CD4-positive, alpha-beta memory T cell (primary cell): ENCODE measurements at regions of chr2 and their contacts with region 1.

Region 1: GRCh38 chr2:218301176-218301819 is 9.0 kb upstream of the TMBIM1 start:
- DNase-seq: peak; percentile 83 to 87 (median 84)
- H3K4me3 ChIP-seq: no peak overlapping the region
- H3K4me3 Mint-ChIP-seq: no peak overlapping the region
- H3K27ac ChIP-seq: no peak overlapping the region
- H3K27ac Mint-ChIP-seq: peak overlapping the region; percentile 7 to 91 (median 39)
- H3K4me1 ChIP-seq: peaks cover 8% of the 10 kb centered on the region
- H3K4me1 Mint-ChIP-seq: peaks cover 3 to 8% (median 5%) of the 10 kb centered on the region in 4 donors
- H3K27me3 ChIP-seq: no peaks in the 10 kb centered on the region
- H3K27me3 Mint-ChIP-seq: no peaks in the 10 kb centered on the region

Region 2: DNA sequence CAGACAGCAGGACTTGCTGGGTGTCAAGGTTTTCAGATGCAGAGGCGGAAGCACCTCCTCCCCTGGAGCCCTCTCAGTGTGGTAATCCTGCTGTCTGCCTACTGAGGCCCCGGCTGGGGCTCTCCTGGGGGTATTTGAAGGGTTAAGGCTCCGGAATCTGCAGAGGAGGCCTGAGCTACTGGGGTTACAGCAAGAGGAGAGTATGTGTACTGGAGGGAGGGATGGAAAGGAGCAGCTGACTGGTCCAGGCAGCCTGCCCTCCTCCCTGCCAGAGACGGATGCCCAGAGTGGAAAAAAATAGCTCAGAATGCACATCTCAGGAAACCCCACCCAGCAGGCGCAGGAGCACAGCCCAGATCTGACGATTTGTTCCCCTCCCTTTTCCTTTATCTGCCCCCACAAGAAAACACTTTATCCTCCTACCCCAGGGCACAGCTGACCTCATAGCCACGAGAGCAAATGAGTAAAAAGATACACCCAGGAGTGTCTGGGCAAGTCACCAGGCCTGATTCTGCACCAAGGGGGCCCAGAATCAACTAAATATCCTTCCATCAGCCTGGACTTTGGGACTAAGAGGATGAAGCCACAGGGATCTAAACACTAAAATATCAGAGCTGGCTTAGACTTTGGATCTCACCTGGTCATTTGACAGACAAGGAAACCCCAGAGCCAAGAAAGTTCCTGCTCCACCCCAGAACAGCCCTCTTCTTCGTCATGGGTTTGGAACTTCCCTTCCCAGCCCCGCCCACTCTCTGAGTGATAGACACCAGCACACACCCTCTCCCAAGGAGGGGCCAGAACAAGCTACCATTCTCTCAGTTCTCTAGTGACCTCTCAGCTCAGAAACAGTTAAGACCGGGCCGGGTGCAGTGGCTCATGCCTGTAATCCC is 14.5 kb before region 1 on chr2:
- CTCF ChIA-PET with region 1: interaction called, 22 read pairs
- POLR2A ChIA-PET with region 1: interaction called, 18 read pairs
- intact Hi-C with region 1: no loop called
- DNase-seq: peak; percentile 84 to 97 (median 87)
- H3K4me3 ChIP-seq: peak overlapping the region; percentile 53 to 86
- H3K4me3 Mint-ChIP-seq: peak overlapping the region; percentile 90 to 97 (median 91)
- H3K27ac ChIP-seq: peak overlapping the region; percentile 94
- H3K27ac Mint-ChIP-seq: peak overlapping the region; percentile 98 to 100 (median 99)
- H3K4me1 ChIP-seq: peaks cover 92% of the 10 kb centered on the region
- H3K4me1 Mint-ChIP-seq: peaks cover 55 to 95% (median 73%) of the 10 kb centered on the region in 4 donors
- H3K27me3 ChIP-seq: no peaks in the 10 kb centered on the region
- H3K27me3 Mint-ChIP-seq: no peaks in the 10 kb centered on the region

Region 3: DNA sequence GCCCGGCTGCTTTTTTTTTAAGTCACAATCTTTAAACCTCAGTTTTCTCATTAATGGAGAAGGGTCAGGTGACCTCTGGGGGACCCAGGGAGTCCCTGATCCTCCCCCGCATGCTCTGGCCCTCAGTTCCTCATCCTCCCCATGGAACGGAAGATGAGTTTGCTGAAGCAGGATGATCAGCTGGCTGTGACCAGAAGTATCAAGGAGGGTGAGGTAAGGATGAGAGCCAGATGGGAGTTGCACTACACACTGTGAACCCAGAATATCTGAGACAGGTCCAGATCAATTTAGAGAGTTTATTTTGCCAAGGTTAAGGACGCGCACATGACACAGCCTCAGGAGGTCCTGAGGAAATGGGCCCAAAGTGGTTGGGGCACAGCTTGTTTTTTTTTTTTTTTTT is 59.1 kb after region 1 on chr2:
- CTCF ChIA-PET with region 1: interaction called, 151 read pairs
- POLR2A ChIA-PET with region 1: interaction called, 12 read pairs
- intact Hi-C with region 1: loop called (anchors 1 kb)
- DNase-seq: no peak
- H3K4me3 ChIP-seq: no peak overlapping the region
- H3K4me3 Mint-ChIP-seq: no peak overlapping the region
- H3K27ac ChIP-seq: no peak overlapping the region
- H3K27ac Mint-ChIP-seq: no peak overlapping the region
- H3K4me1 ChIP-seq: peaks cover 6% of the 10 kb centered on the region
- H3K4me1 Mint-ChIP-seq: peaks cover 0 to 4% (median 2%) of the 10 kb centered on the region in 4 donors
- H3K27me3 ChIP-seq: no peaks in the 10 kb centered on the region
- H3K27me3 Mint-ChIP-seq: no peaks in the 10 kb centered on the region

Region 4: DNA sequence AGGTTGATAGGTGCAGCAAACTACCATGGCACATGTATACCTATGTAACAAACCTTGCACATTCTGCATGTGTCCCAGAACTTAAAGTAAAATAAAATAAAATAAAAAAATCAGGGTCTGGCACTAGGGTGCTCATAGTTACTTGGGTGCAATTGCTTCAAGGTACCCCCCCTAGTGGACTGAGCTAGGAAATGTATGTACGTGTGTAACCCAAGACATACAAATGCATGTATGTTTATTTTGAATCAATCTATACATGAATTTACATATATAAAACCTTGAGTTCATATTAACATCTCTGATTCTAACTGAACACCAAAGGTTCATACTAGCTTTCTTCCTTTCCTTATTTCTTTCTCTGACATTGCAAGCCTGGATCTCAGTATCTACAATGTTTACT is 215.3 kb after region 1 on chr2:
- CTCF ChIA-PET with region 1: interaction called, 3 read pairs
- POLR2A ChIA-PET with region 1: no interaction called
- intact Hi-C with region 1: loop called (anchors 1 kb)
- DNase-seq: peak; percentile 20 to 37 (median 28)
- H3K4me3 ChIP-seq: no peak overlapping the region
- H3K4me3 Mint-ChIP-seq: no peak overlapping the region
- H3K27ac ChIP-seq: no peak overlapping the region
- H3K27ac Mint-ChIP-seq: peak overlapping the region in 2 of 7 donors; percentile 8 to 57
- H3K4me1 ChIP-seq: no peaks in the 10 kb centered on the region
- H3K4me1 Mint-ChIP-seq: peaks cover 0 to 26% (median 10%) of the 10 kb centered on the region in 4 donors
- H3K27me3 ChIP-seq: no peaks in the 10 kb centered on the region
- H3K27me3 Mint-ChIP-seq: no peaks in the 10 kb centered on the region